Right ventricle myocardium inferior (tissue), 1 donor: ENCODE measurements at regions of chr11 and their contacts with region 1.

Region 1: DNA sequence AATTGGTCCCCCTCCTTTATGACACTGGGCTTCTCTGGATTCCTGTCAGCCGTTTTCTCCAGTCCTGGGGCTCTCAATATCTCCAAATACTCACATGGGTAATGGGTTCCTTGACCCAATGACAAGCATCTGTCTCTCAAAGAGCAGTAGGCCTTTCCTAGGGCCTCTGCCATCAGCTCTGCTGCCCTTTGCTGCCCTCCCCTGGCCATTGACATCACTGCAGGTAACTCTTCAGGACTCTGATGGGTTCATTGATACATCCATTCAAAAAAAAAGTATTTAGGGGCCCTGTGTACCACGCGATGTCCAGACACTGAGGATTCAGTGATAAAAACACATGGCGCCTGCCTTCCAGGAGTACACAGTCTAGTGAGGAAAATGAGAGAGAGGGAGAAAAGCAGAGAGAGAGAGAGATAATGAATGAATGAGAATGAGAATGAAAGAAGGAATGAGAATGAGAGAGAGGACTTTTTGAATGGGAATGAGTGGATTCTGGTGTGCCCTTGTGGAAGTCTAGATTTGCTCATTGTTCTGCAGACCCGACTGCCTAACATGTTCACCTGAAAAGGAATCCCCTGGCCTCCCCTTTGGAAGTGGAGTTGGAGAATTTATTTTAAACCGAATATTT is 42.6 kb upstream of the OLFML1 start:
- DNase-seq: peak; percentile 69
- ATAC-seq: peak; percentile 69

Region 2: GRCh38 chr11:7098235-7098832 is 344.4 kb before region 1 on chr11:
- intact Hi-C with region 1: loop called (anchors 5 kb)
- DNase-seq: no peak
- ATAC-seq: peak; percentile 42

Region 3: GRCh38 chr11:7143908-7144307 is 298.8 kb before region 1 on chr11:
- intact Hi-C with region 1: loop called (anchors 5 kb)
- DNase-seq: no peak
- ATAC-seq: no peak

Region 4: DNA sequence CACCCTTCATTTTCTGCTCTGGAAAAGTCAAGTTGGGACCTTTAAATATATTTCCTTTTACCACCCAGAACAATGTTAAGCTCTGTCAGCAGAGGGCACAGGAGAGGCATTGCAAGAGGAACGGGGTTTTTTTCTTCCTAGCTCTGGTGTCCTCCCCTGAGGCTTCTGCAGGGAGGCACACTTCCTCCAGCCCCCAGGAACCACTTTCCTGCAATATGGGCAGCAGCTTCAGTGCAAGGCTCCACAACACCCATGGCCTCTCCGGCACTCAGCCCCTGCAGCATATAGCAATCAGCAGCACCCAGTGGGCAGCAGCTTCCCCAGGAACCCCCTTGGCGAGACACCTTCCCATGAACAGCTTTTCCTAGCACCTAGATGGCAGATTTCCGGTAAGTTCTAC is 89.6 kb before region 1 on chr11:
- intact Hi-C with region 1: loop called (anchors 1 kb)
- DNase-seq: no peak
- ATAC-seq: no peak